PC-9 (cell line): ENCODE measurements at regions of chr2 and their contacts with region 1.

Region 1: GRCh38 chr2:109207176-109207575 is 78.2 kb downstream of the SH3RF3 start:
- DNase-seq: no peak
- H3K4me3 ChIP-seq: no peak overlapping the region
- H3K27ac ChIP-seq: no peak overlapping the region
- H3K4me1 ChIP-seq: peaks cover 47% of the 10 kb centered on the region
- H3K27me3 ChIP-seq: no peaks in the 10 kb centered on the region
- CTCF ChIP-seq: no peak

Region 2: GRCh38 chr2:109304731-109305470 is 97.7 kb after region 1 on chr2:
- CTCF ChIA-PET with region 1: no interaction called
- POLR2A ChIA-PET with region 1: interaction called, 20 read pairs
- intact Hi-C with region 1: no loop called
- DNase-seq: no peak
- H3K4me3 ChIP-seq: no peak overlapping the region
- H3K27ac ChIP-seq: no peak overlapping the region
- H3K4me1 ChIP-seq: no peaks in the 10 kb centered on the region
- H3K27me3 ChIP-seq: no peaks in the 10 kb centered on the region
- CTCF ChIP-seq: no peak